ENCODE measurements at regions of chr7 and their contacts with region 1.

Region 1: DNA sequence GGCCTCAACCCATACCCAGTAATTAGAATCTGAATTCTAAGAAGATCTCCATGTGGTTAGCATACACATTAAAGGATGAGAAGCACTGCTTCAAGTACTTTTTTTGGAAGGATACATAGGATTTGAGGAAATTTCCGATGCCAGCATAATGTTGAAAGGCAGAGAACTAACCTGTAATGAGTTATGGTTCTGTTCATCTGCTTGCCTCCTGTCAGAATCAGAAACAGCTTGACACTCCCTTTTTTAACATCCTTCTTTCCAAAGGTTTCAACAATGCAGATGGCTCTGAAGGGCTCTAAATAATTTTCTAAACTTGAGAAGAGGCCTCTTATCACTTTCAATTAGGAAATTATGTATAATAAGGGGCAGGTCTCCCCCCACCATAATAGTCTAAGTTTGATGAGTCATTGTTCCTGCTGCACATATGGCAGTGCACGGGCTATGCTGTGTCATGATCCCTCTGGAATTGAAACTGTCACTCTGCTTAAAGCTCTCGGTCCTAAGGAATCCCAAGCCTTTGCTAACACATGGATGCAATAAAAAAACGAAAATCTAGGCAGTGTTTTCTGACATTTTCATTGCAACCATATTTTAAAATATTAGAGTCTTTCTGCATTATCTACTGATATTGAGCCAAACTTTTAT is 291.2 kb upstream of the FZD1 start:
- DNase-seq: no peak

Region 2: GRCh38 chr7:90945104-90945787 is 27.8 kb before region 1 on chr7:
- in situ Hi-C with region 1: no loop called
- DNase-seq: no peak

Region 3: GRCh38 chr7:91082038-91082437 is 109.0 kb after region 1 on chr7:
- in situ Hi-C with region 1: no loop called
- DNase-seq: peak; percentile 40

Region 4: DNA sequence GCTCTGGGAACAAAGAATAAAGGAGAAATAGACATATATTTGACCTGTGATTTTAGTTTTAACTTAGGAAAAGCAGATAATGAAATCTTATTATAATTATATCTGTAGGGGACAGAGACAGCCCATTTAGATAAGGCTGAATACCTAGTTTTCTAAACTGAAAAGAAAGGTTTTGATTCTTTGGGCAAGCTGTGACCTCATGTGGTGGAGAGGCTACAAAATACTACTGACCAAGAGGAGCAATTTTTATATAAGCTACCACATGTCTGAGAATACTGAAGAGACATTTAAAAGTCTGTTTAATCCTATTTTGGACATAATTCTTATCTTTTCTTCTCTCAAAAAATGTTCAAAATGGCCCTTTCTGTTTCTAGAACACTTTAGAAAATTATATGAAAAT is 636.5 kb after region 1 on chr7:
- in situ Hi-C with region 1: loop called (anchors 10 kb)
- DNase-seq: peak; percentile 60